ENCODE measurements at regions of chr11 and their contacts with region 1.

Region 1: GRCh38 chr11:72040726-72041441 is 39.5 kb downstream of the NUMA1 start:
- DNase-seq: peak; percentile 95
- H3K4me3 ChIP-seq: peak overlapping the region; percentile 40 to 61 (median 49)
- H3K27ac ChIP-seq: peak overlapping the region; percentile 90 to 97 (median 94)
- H3K4me1 ChIP-seq: peaks cover 31 to 66% (median 53%) of the 10 kb centered on the region in 4 donors
- H3K27me3 ChIP-seq: no peaks in the 10 kb centered on the region
- CTCF ChIP-seq: no peak
- EP300 ChIP-seq: no peak
- POLR2A ChIP-seq: peak; percentile 20

Region 2: GRCh38 chr11:70517986-70518907 is 1522.6 kb before region 1 on chr11:
- in situ Hi-C with region 1: no loop called
- intact Hi-C with region 1: no loop called
- DNase-seq: no peak
- H3K4me3 ChIP-seq: no peak overlapping the region
- H3K27ac ChIP-seq: no peak overlapping the region
- H3K4me1 ChIP-seq: no peaks in the 10 kb centered on the region
- H3K27me3 ChIP-seq: no peaks in the 10 kb centered on the region
- CTCF ChIP-seq: no peak
- EP300 ChIP-seq: no peak
- POLR2A ChIP-seq: no peak

Region 3: DNA sequence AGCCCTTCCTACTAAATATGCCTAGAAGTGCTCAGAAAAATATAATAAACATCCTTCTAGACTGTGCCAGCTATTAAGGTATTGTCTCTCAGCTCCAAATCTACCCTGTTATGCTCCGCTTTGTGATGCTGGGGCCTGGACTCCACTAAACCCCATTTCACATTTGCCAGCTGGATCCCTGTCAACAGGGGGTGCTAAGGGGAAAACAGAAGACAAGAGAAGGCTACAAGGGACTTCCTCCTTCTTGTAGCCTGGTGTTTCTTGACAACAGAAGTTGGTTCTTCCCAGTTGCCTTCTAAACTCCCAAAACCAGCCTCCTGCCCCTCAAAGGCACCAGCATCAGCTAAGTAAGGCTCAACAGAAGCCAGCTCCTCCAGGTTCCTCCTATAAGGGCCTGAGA is 34.2 kb after region 1 on chr11:
- in situ Hi-C with region 1: loop called in 1 of 4 experiments (anchors 5 kb)
- intact Hi-C with region 1: loop called (anchors 2 kb)
- DNase-seq: no peak
- H3K4me3 ChIP-seq: no peak overlapping the region
- H3K27ac ChIP-seq: peak overlapping the region in 2 of 4 donors; percentile 19 to 32
- H3K4me1 ChIP-seq: peaks cover 12 to 44% (median 19%) of the 10 kb centered on the region in 4 donors
- H3K27me3 ChIP-seq: no peaks in the 10 kb centered on the region
- CTCF ChIP-seq: no peak
- EP300 ChIP-seq: no peak
- POLR2A ChIP-seq: no peak

Region 4: GRCh38 chr11:72080256-72080974 is 39.5 kb after region 1 on chr11 and contains the starts of genes LRRC51 and NUMA1:
- in situ Hi-C with region 1: loop called in 1 of 4 experiments (anchors 5 kb)
- intact Hi-C with region 1: loop called (anchors 2 kb)
- DNase-seq: peak; percentile 100
- H3K4me3 ChIP-seq: peak within 1 kb of the TSS; percentile 38 to 100 (median 74)
- H3K27ac ChIP-seq: peak within 1 kb of the TSS; percentile 88 to 98 (median 94)
- H3K4me1 ChIP-seq: peaks cover 10 to 54% (median 22%) of the 10 kb centered on the region in 4 donors
- H3K27me3 ChIP-seq: no peaks in the 10 kb centered on the region
- CTCF ChIP-seq: no peak
- EP300 ChIP-seq: no peak
- POLR2A ChIP-seq: peak; percentile 72
- total RNA-seq, gene LRRC51: 5.1 to 77.4 (median 6.7) TPM
- total RNA-seq, gene NUMA1: 323 to 520 (median 419) TPM

Region 5: DNA sequence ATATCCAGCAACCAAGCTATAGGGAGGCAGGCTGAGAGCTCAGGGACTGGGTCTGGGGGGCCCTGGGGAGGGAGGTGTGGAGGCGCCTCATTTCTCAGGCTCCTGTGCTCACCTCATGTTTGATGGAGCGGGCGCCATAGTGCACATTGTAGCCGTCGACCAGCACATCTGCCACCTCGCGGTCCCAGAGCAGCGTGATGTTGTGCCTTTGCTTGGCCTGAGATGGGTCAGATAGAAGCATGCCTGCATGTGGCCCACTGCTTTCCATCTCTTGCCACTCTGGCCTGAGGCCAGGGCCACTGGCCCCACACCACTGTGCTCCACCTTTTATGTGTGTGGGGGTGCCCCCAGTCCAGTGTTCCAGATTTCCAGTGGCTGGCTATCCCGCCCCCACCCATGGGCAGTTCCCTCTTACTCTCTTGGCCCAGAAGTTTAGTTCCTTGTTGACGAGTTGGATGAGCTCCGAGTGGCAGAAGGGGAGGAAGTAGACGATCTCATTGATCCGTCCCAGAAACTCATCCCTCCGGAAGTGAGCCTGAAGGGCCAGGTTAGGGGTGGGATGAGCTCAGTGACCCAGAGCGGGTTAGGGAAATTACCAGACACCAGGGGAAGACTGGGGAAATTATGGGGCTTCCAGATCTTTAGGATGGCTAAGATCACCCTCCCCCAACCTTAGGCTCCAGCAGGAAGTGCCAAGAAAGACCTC is 253.2 kb after region 1 on chr11:
- in situ Hi-C with region 1: no loop called
- intact Hi-C with region 1: no loop called
- DNase-seq: no peak
- H3K4me3 ChIP-seq: no peak overlapping the region
- H3K27ac ChIP-seq: no peak overlapping the region
- H3K4me1 ChIP-seq: no peaks in the 10 kb centered on the region
- H3K27me3 ChIP-seq: no peaks in the 10 kb centered on the region
- CTCF ChIP-seq: no peak
- EP300 ChIP-seq: no peak
- POLR2A ChIP-seq: no peak

Measured in transverse colon (tissue), 4 donors.